Transverse colon (tissue), 4 donors: ENCODE measurements at regions of chr14 and their contacts with region 1.

Region 1: DNA sequence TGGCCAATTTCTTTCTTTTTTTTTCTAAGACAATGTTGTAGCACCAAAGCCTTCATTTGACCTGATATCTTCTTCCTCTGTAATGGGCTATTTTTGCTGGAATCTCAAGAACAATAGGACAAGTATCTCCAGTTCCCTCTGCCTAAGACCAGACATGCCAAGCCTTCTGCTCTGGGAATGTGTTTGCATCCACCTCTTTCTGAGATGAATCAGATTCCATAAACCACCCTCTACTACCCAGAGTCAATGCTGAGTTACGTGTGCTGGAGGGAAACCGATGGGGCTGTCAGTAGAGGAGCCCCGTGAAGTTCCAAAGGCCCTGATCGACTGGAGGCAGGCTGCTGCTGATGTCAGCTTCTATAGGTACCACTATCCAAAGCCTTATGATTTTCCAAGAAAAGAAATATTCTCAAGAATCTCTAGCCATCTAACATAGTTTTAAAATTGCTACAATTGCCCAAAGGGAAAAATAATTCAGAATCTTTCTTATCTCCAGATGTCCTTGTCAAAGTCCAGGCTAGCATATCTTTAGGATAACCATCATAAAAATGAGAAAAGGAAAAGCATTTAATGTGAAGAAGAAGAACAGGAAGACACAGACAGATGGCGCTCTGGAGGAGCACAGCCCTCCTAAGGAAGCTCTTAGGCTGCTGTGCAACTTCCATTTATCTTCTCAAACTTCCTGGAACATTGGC is 101.9 kb downstream of the SLC8A3 start:
- DNase-seq: peak; percentile 11
- H3K4me3 ChIP-seq: no peak overlapping the region
- H3K27ac ChIP-seq: no peak overlapping the region
- H3K4me1 ChIP-seq: no peaks in the 10 kb centered on the region
- H3K27me3 ChIP-seq: peaks cover 10% of the 10 kb centered on the region
- CTCF ChIP-seq: peak in 3 of 5 experiments; percentile 35 to 44 (median 37)
- EP300 ChIP-seq: no peak
- POLR2A ChIP-seq: no peak

Region 2: GRCh38 chr14:70289138-70289537 is 202.3 kb after region 1 on chr14:
- in situ Hi-C with region 1: no loop called
- intact Hi-C with region 1: no loop called
- DNase-seq: no peak
- H3K4me3 ChIP-seq: no peak overlapping the region
- H3K27ac ChIP-seq: no peak overlapping the region
- H3K4me1 ChIP-seq: no peaks in the 10 kb centered on the region
- H3K27me3 ChIP-seq: no peaks in the 10 kb centered on the region
- CTCF ChIP-seq: no peak
- EP300 ChIP-seq: no peak
- POLR2A ChIP-seq: no peak

Region 3: GRCh38 chr14:70317969-70318634 is 231.3 kb after region 1 on chr14:
- in situ Hi-C with region 1: loop called in 1 of 4 experiments (anchors 25 kb)
- intact Hi-C with region 1: no loop called
- DNase-seq: peak; percentile 29
- H3K4me3 ChIP-seq: no peak overlapping the region
- H3K27ac ChIP-seq: no peak overlapping the region
- H3K4me1 ChIP-seq: peaks cover 0 to 3% (median 0%) of the 10 kb centered on the region in 4 donors
- H3K27me3 ChIP-seq: no peaks in the 10 kb centered on the region
- CTCF ChIP-seq: peak in 4 of 5 experiments; percentile 42 to 56 (median 45)
- EP300 ChIP-seq: no peak
- POLR2A ChIP-seq: no peak